IMR-90 (cell line): ENCODE measurements at regions of chr14 and their contacts with region 1.

Region 1: DNA sequence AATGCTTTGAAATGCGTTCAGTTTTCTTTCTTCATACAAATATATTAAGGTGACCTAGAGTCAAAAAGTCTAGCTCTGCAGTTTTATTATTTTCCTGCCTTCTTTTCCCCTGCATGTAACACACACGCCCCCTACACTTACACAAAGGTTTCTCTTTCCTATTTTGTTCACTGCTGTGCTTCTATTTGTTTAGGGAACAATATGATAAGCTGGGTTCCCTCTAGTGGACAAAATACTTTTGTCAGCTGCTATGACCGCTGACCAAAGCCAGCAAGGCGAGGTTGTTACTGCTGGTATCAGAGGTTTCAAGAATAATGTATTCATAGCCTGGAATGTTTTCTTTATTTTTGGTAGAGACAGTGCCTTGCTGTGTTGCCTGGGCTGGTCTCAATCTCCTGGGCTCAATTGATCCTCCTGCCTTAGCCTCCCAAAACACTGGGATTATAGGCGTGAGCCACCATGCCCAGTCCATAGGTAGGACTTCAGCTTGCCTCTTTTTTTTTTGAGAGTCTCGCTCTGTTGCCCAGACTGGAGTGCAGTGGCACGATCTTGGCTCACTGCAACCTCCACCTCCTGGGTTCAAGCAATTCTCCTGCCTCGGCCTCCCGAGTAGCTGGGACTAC is 33.4 kb downstream of the FNTB start:
- DNase-seq: peak; percentile 83
- ATAC-seq: peak; percentile 99
- H3K4me3 ChIP-seq: no peak overlapping the region
- H3K27ac ChIP-seq: no peak overlapping the region
- H3K4me1 ChIP-seq: no peaks in the 10 kb centered on the region
- H3K27me3 ChIP-seq: no peaks in the 10 kb centered on the region
- CTCF ChIP-seq: peak; percentile 78
- POLR2A ChIP-seq: no peak
- RAD21 ChIP-seq: peak; percentile 59

Region 2: GRCh38 chr14:64098120-64098519 is 921.9 kb before region 1 on chr14:
- CTCF ChIA-PET with region 1: no interaction called
- POLR2A ChIA-PET with region 1: no interaction called
- dilution Hi-C with region 1: no loop called
- in situ Hi-C with region 1: no loop called
- intact Hi-C with region 1: no loop called
- DNase-seq: no peak
- ATAC-seq: no peak
- H3K4me3 ChIP-seq: no peak overlapping the region
- H3K27ac ChIP-seq: no peak overlapping the region
- H3K4me1 ChIP-seq: peaks cover 5% of the 10 kb centered on the region
- H3K27me3 ChIP-seq: no peaks in the 10 kb centered on the region
- CTCF ChIP-seq: no peak
- POLR2A ChIP-seq: no peak
- RAD21 ChIP-seq: no peak

Region 3: DNA sequence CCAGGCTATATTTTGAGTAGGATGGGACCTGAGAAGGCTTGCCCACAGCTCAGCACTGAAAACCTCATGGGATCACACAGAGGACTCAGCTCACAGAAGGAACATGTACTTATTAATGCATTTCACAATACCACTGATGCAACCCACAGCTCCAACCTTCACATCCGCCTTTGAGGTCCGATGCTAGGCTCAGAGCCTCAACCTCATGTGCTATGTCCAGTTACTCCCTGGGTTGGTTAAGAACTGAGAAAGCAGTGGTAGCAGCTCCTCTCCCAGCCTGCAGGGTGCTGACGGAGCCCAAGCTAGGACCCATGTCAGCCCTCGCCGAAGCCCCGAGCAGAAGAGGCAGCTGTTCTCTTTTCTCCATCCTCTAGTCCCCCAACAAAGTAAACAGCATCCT is 193.2 kb before region 1 on chr14:
- CTCF ChIA-PET with region 1: no interaction called
- POLR2A ChIA-PET with region 1: no interaction called
- dilution Hi-C with region 1: no loop called
- in situ Hi-C with region 1: no loop called
- intact Hi-C with region 1: no loop called
- DNase-seq: no peak
- ATAC-seq: no peak
- H3K4me3 ChIP-seq: no peak overlapping the region
- H3K27ac ChIP-seq: no peak overlapping the region
- H3K4me1 ChIP-seq: no peaks in the 10 kb centered on the region; the same call in 1 of the 2 replicates
- H3K27me3 ChIP-seq: peaks cover 42% of the 10 kb centered on the region
- CTCF ChIP-seq: no peak
- POLR2A ChIP-seq: no peak
- RAD21 ChIP-seq: no peak

Region 4: DNA sequence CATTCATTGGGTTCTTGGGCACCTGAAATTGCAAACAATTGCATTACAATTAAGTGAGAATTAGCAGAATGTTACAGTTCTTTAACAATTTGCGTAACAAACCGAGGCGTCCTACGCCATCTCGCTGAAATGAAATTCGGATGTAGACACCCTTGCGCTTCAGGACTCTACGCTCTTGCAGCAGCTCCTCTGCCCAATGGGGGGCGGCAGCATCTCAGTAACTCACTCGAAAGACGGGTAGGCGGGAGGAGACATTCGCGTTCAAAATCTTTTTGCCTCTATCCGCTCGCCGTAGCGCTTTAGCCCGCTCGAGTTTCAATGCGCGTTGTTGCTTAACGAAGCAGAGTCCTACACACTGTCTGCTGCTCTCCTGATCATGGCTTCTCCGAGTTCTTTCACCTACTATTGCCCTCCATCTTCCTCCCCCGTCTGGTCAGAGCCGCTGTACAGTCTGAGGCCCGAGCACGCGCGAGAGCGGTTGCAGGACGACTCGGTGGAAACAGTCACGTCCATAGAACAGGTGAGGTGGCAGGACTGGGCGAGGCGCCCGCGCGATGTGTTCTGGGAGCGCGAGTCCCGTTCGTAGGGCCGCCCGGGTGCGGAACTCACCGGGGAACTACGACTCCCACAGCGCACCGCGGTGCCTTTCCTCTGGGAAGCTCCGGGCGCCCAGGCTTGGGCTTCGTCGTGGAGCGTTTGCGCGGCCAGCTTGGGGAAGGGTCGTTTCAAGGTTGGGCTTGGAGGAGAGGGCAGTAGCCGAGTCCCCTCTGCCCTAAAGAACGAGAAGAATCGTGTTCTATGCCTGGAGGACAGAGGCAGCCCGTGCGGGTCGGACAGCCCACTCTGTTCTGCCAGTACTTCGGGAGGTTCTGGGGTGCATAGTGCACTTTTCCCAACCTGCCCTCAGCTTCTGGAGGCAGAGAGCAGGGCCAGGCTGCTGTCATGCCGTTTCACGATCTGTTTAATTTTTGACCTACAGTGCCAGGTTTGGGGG is 33.2 kb before region 1 on chr14 and contains the start of gene FNTB:
- CTCF ChIA-PET with region 1: interaction called, 34 read pairs
- POLR2A ChIA-PET with region 1: no interaction called
- dilution Hi-C with region 1: no loop called
- in situ Hi-C with region 1: no loop called
- intact Hi-C with region 1: loop called (anchors 1 kb)
- DNase-seq: peak; percentile 97
- ATAC-seq: peak; percentile 96
- H3K4me3 ChIP-seq: peak within 1 kb of the TSS; percentile 58
- H3K27ac ChIP-seq: peak within 1 kb of the TSS; percentile 77
- H3K4me1 ChIP-seq: 0 out of 2 replicates have a peak, but pooled peaks cover 1% of the 10 kb centered on the region
- H3K27me3 ChIP-seq: peaks cover 2% of the 10 kb centered on the region; the same call in 1 of the 2 replicates
- CTCF ChIP-seq: peak; percentile 98
- POLR2A ChIP-seq: peak; percentile 21; the same call in 1 of the 2 replicates
- RAD21 ChIP-seq: peak; percentile 91
- total RNA-seq, gene FNTB: 8.1 and 9.9 TPM in 2 replicates

Region 5: GRCh38 chr14:64993266-64993930 is 26.7 kb before region 1 on chr14:
- CTCF ChIA-PET with region 1: interaction called, 18 read pairs
- POLR2A ChIA-PET with region 1: no interaction called
- dilution Hi-C with region 1: no loop called
- in situ Hi-C with region 1: no loop called
- intact Hi-C with region 1: no loop called
- DNase-seq: no peak
- ATAC-seq: no peak
- H3K4me3 ChIP-seq: no peak overlapping the region
- H3K27ac ChIP-seq: no peak overlapping the region; the same call in 1 of the 2 replicates
- H3K4me1 ChIP-seq: peaks cover 8% of the 10 kb centered on the region
- H3K27me3 ChIP-seq: no peaks in the 10 kb centered on the region
- CTCF ChIP-seq: no peak
- POLR2A ChIP-seq: no peak
- RAD21 ChIP-seq: no peak

Region 6: GRCh38 chr14:65006261-65006721 is 13.8 kb before region 1 on chr14:
- CTCF ChIA-PET with region 1: interaction called, 16 read pairs
- POLR2A ChIA-PET with region 1: no interaction called
- dilution Hi-C with region 1: no loop called
- in situ Hi-C with region 1: no loop called
- intact Hi-C with region 1: no loop called
- DNase-seq: no peak
- ATAC-seq: no peak
- H3K4me3 ChIP-seq: no peak overlapping the region
- H3K27ac ChIP-seq: no peak overlapping the region
- H3K4me1 ChIP-seq: peaks cover 8% of the 10 kb centered on the region
- H3K27me3 ChIP-seq: no peaks in the 10 kb centered on the region
- CTCF ChIP-seq: no peak
- POLR2A ChIP-seq: no peak
- RAD21 ChIP-seq: no peak

Region 7: GRCh38 chr14:65211341-65211987 is 191.4 kb after region 1 on chr14:
- CTCF ChIA-PET with region 1: no interaction called
- POLR2A ChIA-PET with region 1: no interaction called
- dilution Hi-C with region 1: no loop called
- in situ Hi-C with region 1: no loop called
- intact Hi-C with region 1: no loop called
- DNase-seq: peak; percentile 85
- ATAC-seq: peak; percentile 93
- H3K4me3 ChIP-seq: no peak overlapping the region
- H3K27ac ChIP-seq: peak overlapping the region; percentile 97
- H3K4me1 ChIP-seq: peaks cover 13% of the 10 kb centered on the region
- H3K27me3 ChIP-seq: no peaks in the 10 kb centered on the region
- CTCF ChIP-seq: no peak
- POLR2A ChIP-seq: no peak
- RAD21 ChIP-seq: no peak